ENCODE measurements at regions of chr18 and their contacts with region 1.

Region 1: DNA sequence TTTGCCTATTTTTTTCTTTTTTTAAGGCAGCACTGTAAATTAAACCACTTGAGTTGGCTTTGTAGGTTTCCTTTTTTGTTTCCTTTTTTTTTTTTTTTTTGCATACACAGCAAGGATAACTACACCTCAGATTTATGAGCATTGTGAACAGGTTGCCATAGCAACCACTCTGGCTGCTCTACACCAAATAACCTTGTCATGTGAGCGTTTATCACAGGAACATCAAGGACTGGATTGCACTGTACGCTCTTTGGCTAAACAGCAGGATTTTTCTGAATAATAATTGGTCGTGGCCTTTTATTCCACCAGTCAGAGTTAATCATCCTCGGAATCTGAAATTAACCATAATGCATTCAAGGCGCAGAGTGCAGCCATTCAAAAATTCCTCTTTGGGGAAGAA is 199.1 kb upstream of the SLC14A2 start:
- DNase-seq: peak; percentile 12
- H3K4me3 ChIP-seq: no peak overlapping the region
- H3K27ac ChIP-seq: no peak overlapping the region
- H3K4me1 ChIP-seq: peaks cover 0 to 7% (median 3%) of the 10 kb centered on the region in 4 donors
- H3K27me3 ChIP-seq: no peaks in the 10 kb centered on the region
- CTCF ChIP-seq: no peak
- EP300 ChIP-seq: no peak
- POLR2A ChIP-seq: no peak

Region 2: GRCh38 chr18:45324495-45325113 is 91.6 kb before region 1 on chr18:
- in situ Hi-C with region 1: loop called in 1 of 4 experiments (anchors 25 kb)
- intact Hi-C with region 1: no loop called
- DNase-seq: peak; percentile 20
- H3K4me3 ChIP-seq: no peak overlapping the region
- H3K27ac ChIP-seq: no peak overlapping the region
- H3K4me1 ChIP-seq: no peaks in the 10 kb centered on the region
- H3K27me3 ChIP-seq: no peaks in the 10 kb centered on the region
- CTCF ChIP-seq: no peak
- EP300 ChIP-seq: no peak
- POLR2A ChIP-seq: no peak

Measured in transverse colon (tissue), 4 donors.